ENCODE measurements at regions of chr6 and their contacts with region 1.

Region 1: GRCh38 chr6:153023977-153024708 is 21.6 kb upstream of the MTRF1L start:
- DNase-seq: peak; percentile 34 to 47
- ATAC-seq: peak; percentile 95 to 98
- H3K4me3 ChIP-seq: no peak overlapping the region
- H3K27ac ChIP-seq: no peak overlapping the region
- H3K4me1 ChIP-seq: peaks cover 10% of the 10 kb centered on the region; the same call in 2 of the 3 replicates
- CTCF ChIP-seq: peak; percentile 64
- EP300 ChIP-seq: no peak
- POLR2A ChIP-seq: no peak
- RAD21 ChIP-seq: peak; percentile 49 to 60; a peak in 4 of 5 replicates

Region 2: DNA sequence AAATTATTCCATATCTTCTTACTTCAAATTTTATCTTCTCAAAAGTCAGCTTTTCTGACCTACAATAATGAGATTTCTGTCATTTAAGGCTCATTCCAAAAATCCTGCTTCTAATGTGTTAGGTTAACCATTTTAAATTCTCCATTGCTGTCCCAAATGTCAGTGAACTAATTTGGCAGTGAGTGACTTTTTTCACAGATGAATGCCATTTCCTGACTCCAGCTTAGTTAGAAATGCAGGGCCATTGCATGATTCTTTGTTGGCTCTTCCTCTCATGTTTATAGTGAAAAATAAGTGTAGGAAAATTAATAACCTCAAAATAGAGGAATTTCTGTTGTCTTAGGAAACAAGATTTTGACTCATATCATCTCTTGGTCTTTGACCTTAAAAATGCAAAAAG is 229.4 kb before region 1 on chr6:
- CTCF ChIA-PET with region 1: no interaction called
- POLR2A ChIA-PET with region 1: no interaction called
- DNase-seq: no peak
- ATAC-seq: no peak
- H3K4me3 ChIP-seq: no peak overlapping the region
- H3K27ac ChIP-seq: no peak overlapping the region
- H3K4me1 ChIP-seq: no peaks in the 10 kb centered on the region
- CTCF ChIP-seq: no peak
- EP300 ChIP-seq: no peak
- POLR2A ChIP-seq: no peak
- RAD21 ChIP-seq: no peak

Region 3: DNA sequence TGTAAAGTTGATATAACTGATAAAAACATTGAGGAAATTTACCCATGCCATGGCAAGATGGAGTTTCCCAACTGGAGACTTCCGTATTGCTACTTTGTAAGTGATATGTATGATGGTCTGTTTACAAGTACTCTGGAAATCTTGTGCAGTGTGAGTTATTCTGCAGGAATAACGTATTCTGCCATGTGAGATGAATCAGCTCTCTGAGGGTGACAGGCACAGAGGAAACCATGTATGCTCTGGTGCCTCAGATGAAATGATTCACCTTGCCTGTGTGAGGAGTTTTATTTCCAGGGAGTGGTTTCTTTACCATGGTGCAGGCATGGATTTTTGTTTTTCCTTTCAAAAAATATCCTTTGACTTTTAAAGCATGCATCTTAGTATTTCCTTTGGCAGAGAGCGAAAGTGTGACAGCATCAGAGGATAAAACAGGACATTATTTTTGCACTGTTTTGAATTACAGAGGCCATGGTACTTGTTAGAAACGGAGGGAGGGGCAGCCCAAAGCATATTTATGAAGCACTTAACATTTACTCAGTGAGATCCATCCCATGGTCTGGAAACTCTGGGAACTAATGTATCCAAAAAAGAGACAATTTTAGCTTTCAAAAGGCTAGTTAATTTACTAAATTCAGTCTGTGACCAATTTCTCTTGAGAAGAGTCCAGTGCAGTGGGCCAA is 14.4 kb after region 1 on chr6:
- CTCF ChIA-PET with region 1: interaction called, 12 read pairs
- POLR2A ChIA-PET with region 1: no interaction called
- DNase-seq: no peak
- ATAC-seq: no peak
- H3K4me3 ChIP-seq: no peak overlapping the region
- H3K27ac ChIP-seq: no peak overlapping the region
- H3K4me1 ChIP-seq: no peaks in the 10 kb centered on the region
- CTCF ChIP-seq: no peak
- EP300 ChIP-seq: no peak
- POLR2A ChIP-seq: no peak
- RAD21 ChIP-seq: no peak

Region 4: DNA sequence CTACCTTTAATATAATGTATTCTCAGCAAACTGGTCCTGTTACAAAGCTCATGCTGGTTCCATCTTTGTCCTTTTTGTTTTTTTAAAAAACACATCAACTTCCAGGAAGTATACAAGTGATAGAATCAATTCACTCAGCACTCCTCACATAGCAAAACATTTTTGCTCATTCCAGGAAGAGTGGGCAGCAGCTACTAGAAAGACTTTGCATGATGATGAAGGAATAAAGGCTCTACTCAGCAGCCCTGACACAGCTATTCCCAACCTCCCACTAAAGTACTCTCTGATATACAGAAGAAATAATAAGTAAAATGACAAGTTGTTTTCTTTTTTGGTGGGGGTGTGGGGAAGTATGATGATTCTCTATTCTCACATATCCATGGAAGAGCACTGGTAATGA is 45.8 kb after region 1 on chr6:
- CTCF ChIA-PET with region 1: no interaction called
- POLR2A ChIA-PET with region 1: no interaction called
- DNase-seq: no peak
- ATAC-seq: no peak
- H3K4me3 ChIP-seq: no peak overlapping the region
- H3K27ac ChIP-seq: no peak overlapping the region
- H3K4me1 ChIP-seq: no peaks in the 10 kb centered on the region
- CTCF ChIP-seq: no peak
- EP300 ChIP-seq: no peak
- POLR2A ChIP-seq: no peak
- RAD21 ChIP-seq: no peak